ENCODE measurements at regions of chr12 and their contacts with region 1.

Region 1: DNA sequence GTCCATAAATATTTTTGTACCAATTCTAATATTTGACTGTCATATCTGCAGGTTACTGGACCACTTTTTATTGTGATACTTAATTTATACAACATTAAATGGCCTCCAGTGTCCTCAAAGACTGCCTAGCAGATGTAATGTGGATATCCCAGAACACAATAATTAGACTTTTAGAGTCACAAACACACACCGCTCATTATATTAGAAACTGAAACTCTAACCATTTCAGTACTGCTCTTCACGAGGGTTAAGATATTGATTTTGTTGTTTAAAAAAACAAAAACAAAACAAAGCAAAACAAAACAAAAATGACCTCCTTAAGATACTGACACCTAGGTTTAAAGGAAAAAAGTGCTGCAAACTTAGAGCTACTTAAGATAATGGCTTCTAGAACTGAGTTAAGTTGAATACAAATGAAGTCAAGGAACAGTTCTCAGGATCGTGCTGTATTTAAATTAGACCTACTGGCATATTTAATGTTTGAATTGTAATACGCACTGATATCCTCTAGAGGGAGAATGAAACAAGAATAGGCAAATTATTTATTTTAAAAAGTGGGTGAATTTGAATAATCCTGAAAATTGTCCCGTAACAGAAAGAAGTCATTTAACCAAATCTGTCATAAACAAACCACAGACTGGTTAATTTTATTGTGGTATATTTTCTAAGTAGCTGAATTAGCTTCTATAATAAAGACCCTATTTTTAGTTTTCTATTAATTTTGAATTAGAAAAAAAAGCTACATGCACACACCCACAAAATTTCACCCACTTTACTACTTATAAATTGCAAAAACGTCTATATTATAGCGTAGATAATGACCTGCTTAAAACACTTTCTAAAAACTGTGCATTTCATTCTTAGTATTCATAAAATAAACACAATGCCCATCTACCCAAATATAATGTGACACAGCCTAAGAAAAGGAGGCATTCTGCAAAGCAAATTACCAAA is 395.2 kb upstream of the DCN start:
- DNase-seq: no peak
- H3K4me3 ChIP-seq: peak overlapping the region; percentile 49; the same call in 1 of the 2 replicates
- H3K27ac ChIP-seq: no peak overlapping the region
- H3K4me1 ChIP-seq: 0 out of 2 replicates have a peak, but pooled peaks cover 4% of the 10 kb centered on the region
- H3K27me3 ChIP-seq: no peaks in the 10 kb centered on the region
- CTCF ChIP-seq: peak; percentile 81

Region 2: DNA sequence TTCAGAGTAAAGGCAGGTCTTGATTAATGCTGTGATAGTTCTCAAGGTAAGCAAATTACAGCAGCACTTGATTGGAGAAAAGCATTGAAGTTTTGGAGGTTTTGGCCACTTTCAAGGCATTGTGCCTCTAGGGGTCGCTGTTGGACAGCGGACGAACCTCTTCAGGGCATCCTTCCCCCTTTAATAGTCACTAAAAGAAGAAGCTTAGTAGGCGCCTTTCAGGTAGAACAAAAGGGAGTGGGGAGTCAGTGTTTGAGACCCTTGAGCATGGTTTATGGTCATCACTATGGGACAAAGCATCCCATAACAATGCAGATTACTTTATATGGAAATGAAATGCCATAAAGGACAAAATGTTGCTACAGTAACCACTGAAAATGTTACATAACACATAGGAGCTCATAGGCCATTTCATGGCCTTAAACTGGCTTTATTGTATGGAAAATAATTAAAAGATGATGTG is 195.8 kb before region 1 on chr12:
- CTCF ChIA-PET with region 1: no interaction called
- POLR2A ChIA-PET with region 1: no interaction called
- intact Hi-C with region 1: loop called (anchors 5 kb)
- DNase-seq: peak; percentile 51 to 67
- H3K4me3 ChIP-seq: no peak overlapping the region
- H3K27ac ChIP-seq: no peak overlapping the region
- H3K4me1 ChIP-seq: peaks cover 9% of the 10 kb centered on the region
- H3K27me3 ChIP-seq: no peaks in the 10 kb centered on the region
- CTCF ChIP-seq: peak; percentile 96